GM12878 (cell line): ENCODE measurements at regions of chr3 and their contacts with region 1.

Region 1: GRCh38 chr3:119819806-119820205 is 37.9 kb downstream of the NR1I2 start:
- DNase-seq: no peak
- ATAC-seq: no peak
- H3K4me3 ChIP-seq: no peak overlapping the region
- H3K27ac ChIP-seq: no peak overlapping the region
- H3K4me1 ChIP-seq: no peaks in the 10 kb centered on the region
- H3K27me3 ChIP-seq: no peaks in the 10 kb centered on the region
- CTCF ChIP-seq: no peak
- EP300 ChIP-seq: no peak
- POLR2A ChIP-seq: no peak
- RAD21 ChIP-seq: no peak

Region 2: GRCh38 chr3:119831022-119831421 is 11.2 kb after region 1 on chr3:
- CTCF ChIA-PET with region 1: interaction called, 15 read pairs
- POLR2A ChIA-PET with region 1: no interaction called
- RAD21 ChIA-PET with region 1: no interaction called
- SMC1A ChIA-PET with region 1: interaction called, 4 read pairs
- in situ Hi-C with region 1: no loop called
- intact Hi-C with region 1: no loop called
- DNase-seq: no peak
- ATAC-seq: 0 out of 3 replicates have a peak, but pooled peaks have one; percentile 44
- H3K4me3 ChIP-seq: no peak overlapping the region
- H3K27ac ChIP-seq: no peak overlapping the region
- H3K4me1 ChIP-seq: no peaks in the 10 kb centered on the region
- H3K27me3 ChIP-seq: no peaks in the 10 kb centered on the region
- CTCF ChIP-seq: peak in 1 of 3 experiments; percentile 24; a peak in 2 of 6 replicates
- EP300 ChIP-seq: no peak
- POLR2A ChIP-seq: no peak
- RAD21 ChIP-seq: 0 out of 2 replicates have a peak, but pooled peaks have one; percentile 1

Region 3: DNA sequence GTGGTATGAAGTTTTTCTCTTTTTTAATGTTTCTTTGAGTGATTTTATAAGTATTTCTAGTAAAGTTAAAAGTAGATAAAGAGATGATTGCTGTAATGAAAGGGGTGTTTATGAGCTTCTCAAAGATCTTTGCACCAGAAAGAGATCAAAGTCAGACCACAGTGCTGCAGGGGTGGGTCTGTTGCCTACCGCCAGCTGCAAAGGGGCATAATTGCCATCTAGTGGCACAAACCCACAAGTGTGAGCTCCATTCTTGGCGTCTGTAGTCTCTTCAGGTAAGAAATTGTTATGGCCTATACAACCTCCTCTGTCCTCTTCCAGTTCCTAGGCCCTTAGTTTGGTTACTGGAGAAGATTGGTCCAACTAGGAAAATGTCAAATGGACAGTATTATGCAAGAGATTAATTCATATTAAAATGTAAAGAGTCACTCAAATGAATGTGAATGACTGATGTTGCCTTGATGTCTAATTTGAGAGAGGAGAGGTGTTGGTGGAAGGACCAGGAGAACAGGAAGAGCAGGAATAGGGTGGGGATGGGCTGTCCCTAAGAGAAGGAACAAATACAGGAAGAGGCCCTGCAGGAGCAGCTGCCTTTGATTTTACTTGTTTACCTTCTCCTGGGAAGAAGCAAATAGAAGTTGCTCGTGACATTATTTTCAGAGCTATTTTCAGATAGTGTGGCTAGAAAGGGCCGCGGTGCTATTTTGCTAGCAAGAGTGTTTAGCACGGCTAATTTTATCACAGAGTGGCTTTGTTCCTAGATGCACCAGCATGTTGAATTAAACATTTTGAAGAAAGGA is 327.5 kb after region 1 on chr3:
- CTCF ChIA-PET with region 1: interaction called, 9 read pairs
- POLR2A ChIA-PET with region 1: interaction called, 3 read pairs
- RAD21 ChIA-PET with region 1: interaction called, 7 read pairs
- SMC1A ChIA-PET with region 1: interaction called, 4 read pairs
- in situ Hi-C with region 1: no loop called
- intact Hi-C with region 1: loop called (anchors 5 kb)
- DNase-seq: no peak
- ATAC-seq: peak; percentile 82
- H3K4me3 ChIP-seq: no peak overlapping the region
- H3K27ac ChIP-seq: no peak overlapping the region
- H3K4me1 ChIP-seq: peaks cover 10% of the 10 kb centered on the region
- H3K27me3 ChIP-seq: no peaks in the 10 kb centered on the region
- CTCF ChIP-seq: peak; percentile 37 to 42 (median 39); a peak in 5 of 6 replicates
- EP300 ChIP-seq: no peak
- POLR2A ChIP-seq: no peak
- RAD21 ChIP-seq: peak; percentile 73

Region 4: DNA sequence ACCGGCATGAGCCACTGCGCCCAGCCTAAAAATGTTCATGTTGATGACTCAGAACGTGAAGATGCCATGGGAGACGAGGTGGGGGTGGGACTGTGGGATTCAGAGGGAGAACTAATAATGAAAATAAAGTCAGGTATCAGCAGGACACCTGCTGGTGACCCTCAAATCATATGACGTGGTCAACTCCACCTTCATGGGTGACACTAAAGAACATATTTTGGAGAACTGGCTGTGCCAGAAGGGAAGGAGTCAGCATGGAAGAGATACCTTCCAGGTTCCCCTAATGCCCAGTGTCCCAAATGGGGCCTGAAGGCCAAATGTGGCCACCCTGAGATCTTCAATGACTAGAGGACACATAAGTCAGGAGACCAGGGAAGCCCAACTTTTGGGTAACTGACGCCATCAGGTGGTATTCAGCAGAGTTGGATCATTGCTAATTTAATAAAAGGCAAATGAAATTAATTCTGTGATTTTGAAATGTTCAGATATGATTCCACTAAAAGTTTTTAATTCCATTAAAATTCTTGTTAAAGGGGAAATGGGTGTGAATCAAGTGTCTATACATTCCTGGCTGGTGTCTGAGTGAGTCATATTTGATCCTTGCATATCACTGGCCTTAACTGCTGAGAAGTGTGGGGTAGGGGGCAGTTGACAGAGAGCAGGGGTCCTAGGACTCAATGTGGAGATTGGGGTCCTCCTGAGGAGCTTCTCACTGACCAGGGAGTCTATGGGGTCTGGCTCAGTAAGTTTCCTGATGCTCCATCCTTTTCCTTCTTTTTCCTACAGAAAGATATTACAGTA is 363.1 kb after region 1 on chr3:
- CTCF ChIA-PET with region 1: interaction called, 3 read pairs
- POLR2A ChIA-PET with region 1: no interaction called
- RAD21 ChIA-PET with region 1: no interaction called
- SMC1A ChIA-PET with region 1: interaction called, 3 read pairs
- in situ Hi-C with region 1: no loop called
- intact Hi-C with region 1: loop called (anchors 2 kb)
- DNase-seq: no peak
- ATAC-seq: peak; percentile 56; the same call in 2 of the 3 replicates
- H3K4me3 ChIP-seq: no peak overlapping the region
- H3K27ac ChIP-seq: no peak overlapping the region
- H3K4me1 ChIP-seq: no peaks in the 10 kb centered on the region
- H3K27me3 ChIP-seq: no peaks in the 10 kb centered on the region; a peak in 1 of 4 replicates
- CTCF ChIP-seq: peak; percentile 14 to 40 (median 37); a peak in 5 of 6 replicates
- EP300 ChIP-seq: no peak
- POLR2A ChIP-seq: no peak
- RAD21 ChIP-seq: peak; percentile 76

Region 5: GRCh38 chr3:120558771-120559241 is 739.0 kb after region 1 on chr3:
- CTCF ChIA-PET with region 1: no interaction called
- POLR2A ChIA-PET with region 1: no interaction called
- RAD21 ChIA-PET with region 1: no interaction called
- SMC1A ChIA-PET with region 1: no interaction called
- in situ Hi-C with region 1: no loop called
- intact Hi-C with region 1: loop called (anchors 10 kb)
- DNase-seq: peak; percentile 33
- ATAC-seq: peak; percentile 93
- H3K4me3 ChIP-seq: peak overlapping the region; percentile 55; the same call in 1 of the 2 replicates
- H3K27ac ChIP-seq: no peak overlapping the region
- H3K4me1 ChIP-seq: peaks cover 3% of the 10 kb centered on the region; the same call in 1 of the 2 replicates
- H3K27me3 ChIP-seq: no peaks in the 10 kb centered on the region
- CTCF ChIP-seq: peak; percentile 88 to 95 (median 95)
- EP300 ChIP-seq: peak in 1 of 2 experiments; percentile 43; a peak in 1 of 4 replicates
- POLR2A ChIP-seq: no peak
- RAD21 ChIP-seq: peak; percentile 84